Sigmoid colon (tissue), 7 donors: ENCODE measurements at regions of chr16 and their contacts with region 1.

Region 1: GRCh38 chr16:425082-425718 is at the start of gene RAB11FIP3:
- DNase-seq: peak; percentile 93
- H3K4me3 ChIP-seq: peak within 1 kb of the TSS; percentile 64 to 81 (median 74)
- H3K27ac ChIP-seq: peak within 1 kb of the TSS; percentile 94 to 99 (median 98)
- H3K4me1 ChIP-seq: peaks cover 0 to 49% (median 45%) of the 10 kb centered on the region in 4 donors
- H3K27me3 ChIP-seq: no peaks in the 10 kb centered on the region
- CTCF ChIP-seq: peak in 1 of 4 experiments; percentile 3
- EP300 ChIP-seq: no peak
- POLR2A ChIP-seq: peak; percentile 79 to 83
- total RNA-seq, gene RAB11FIP3: 20.0 to 44.9 (median 28.9) TPM

Region 2: GRCh38 chr16:352547-353403 is 72.4 kb before region 1 on chr16 and contains the start of gene AXIN1:
- intact Hi-C with region 1: loop called (anchors 1 kb)
- DNase-seq: peak; percentile 100
- H3K4me3 ChIP-seq: peak within 1 kb of the TSS; percentile 47 to 86 (median 81)
- H3K27ac ChIP-seq: peak within 1 kb of the TSS; percentile 73 to 84 (median 79)
- H3K4me1 ChIP-seq: peaks cover 0 to 17% (median 13%) of the 10 kb centered on the region in 4 donors
- H3K27me3 ChIP-seq: no peaks in the 10 kb centered on the region
- CTCF ChIP-seq: peak in 1 of 4 experiments; percentile 64
- EP300 ChIP-seq: no peak
- POLR2A ChIP-seq: peak in 1 of 2 donors; percentile 65
- total RNA-seq, gene AXIN1: 17.9 to 29.9 (median 20.9) TPM

Region 3: GRCh38 chr16:381789-382717 is 43.1 kb before region 1 on chr16 and contains the start of gene PGAP6:
- intact Hi-C with region 1: loop called (anchors 5 kb)
- DNase-seq: peak; percentile 83
- H3K4me3 ChIP-seq: peak within 1 kb of the TSS; percentile 76 to 99 (median 81)
- H3K27ac ChIP-seq: peak within 1 kb of the TSS; percentile 82 to 89 (median 86)
- H3K4me1 ChIP-seq: peaks cover 3 to 59% (median 41%) of the 10 kb centered on the region in 4 donors
- H3K27me3 ChIP-seq: no peaks in the 10 kb centered on the region
- CTCF ChIP-seq: no peak
- EP300 ChIP-seq: no peak
- POLR2A ChIP-seq: no peak
- total RNA-seq, gene PGAP6: 20.7 to 26.6 (median 22.7) TPM

Region 4: GRCh38 chr16:401468-402348 is 23.5 kb before region 1 on chr16 and contains the start of gene DECR2:
- intact Hi-C with region 1: loop called (anchors 1 kb)
- DNase-seq: peak; percentile 97
- H3K4me3 ChIP-seq: peak within 1 kb of the TSS; percentile 66 to 90 (median 87)
- H3K27ac ChIP-seq: peak within 1 kb of the TSS; percentile 91 to 96 (median 93)
- H3K4me1 ChIP-seq: peaks cover 0 to 42% (median 33%) of the 10 kb centered on the region in 4 donors
- H3K27me3 ChIP-seq: no peaks in the 10 kb centered on the region
- CTCF ChIP-seq: peak; percentile 10 to 56 (median 35)
- EP300 ChIP-seq: no peak
- POLR2A ChIP-seq: peak in 1 of 2 donors; percentile 76
- total RNA-seq, gene DECR2: 15.0 to 21.6 (median 16.4) TPM

Region 5: DNA sequence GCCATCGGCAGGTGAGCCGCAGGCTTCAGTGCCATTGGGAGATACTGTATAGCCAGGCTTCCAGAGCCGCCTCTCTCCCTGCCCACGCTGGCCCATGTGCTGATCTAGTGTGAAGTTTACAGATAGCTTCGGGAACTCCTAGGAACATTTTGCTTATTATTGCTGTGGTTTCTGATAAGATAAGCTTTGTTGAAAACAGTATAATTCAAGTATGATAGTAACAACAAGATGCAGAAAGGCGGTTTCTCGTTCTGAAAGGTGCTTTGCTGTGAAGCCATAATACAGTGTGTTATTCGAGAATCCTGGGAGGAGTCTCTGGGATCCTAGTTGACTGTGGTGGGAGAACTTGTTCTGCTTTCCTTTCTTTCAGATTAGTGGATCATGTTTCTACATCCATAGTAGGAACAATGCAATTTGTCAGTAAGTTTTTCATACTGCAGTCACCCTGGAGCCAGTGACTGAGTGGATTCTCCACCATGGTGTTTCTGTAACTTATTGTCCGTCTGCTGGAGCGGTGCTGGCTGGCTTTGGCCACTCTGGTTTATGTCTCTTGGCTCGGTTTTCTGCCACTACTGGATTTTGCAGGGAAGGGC is 31.8 kb after region 1 on chr16:
- intact Hi-C with region 1: loop called (anchors 2 kb)
- DNase-seq: no peak
- H3K4me3 ChIP-seq: no peak overlapping the region
- H3K27ac ChIP-seq: peak overlapping the region; percentile 42 to 69 (median 58)
- H3K4me1 ChIP-seq: peaks cover 0 to 24% (median 13%) of the 10 kb centered on the region in 4 donors
- H3K27me3 ChIP-seq: no peaks in the 10 kb centered on the region
- CTCF ChIP-seq: no peak
- EP300 ChIP-seq: no peak
- POLR2A ChIP-seq: no peak

Region 6: GRCh38 chr16:471353-472198 is 46.4 kb after region 1 on chr16:
- intact Hi-C with region 1: loop called (anchors 5 kb)
- DNase-seq: peak; percentile 72
- H3K4me3 ChIP-seq: no peak overlapping the region
- H3K27ac ChIP-seq: peak overlapping the region; percentile 1 to 60 (median 44)
- H3K4me1 ChIP-seq: peaks cover 0 to 13% (median 12%) of the 10 kb centered on the region in 4 donors
- H3K27me3 ChIP-seq: no peaks in the 10 kb centered on the region
- CTCF ChIP-seq: no peak
- EP300 ChIP-seq: no peak
- POLR2A ChIP-seq: no peak

Region 7: GRCh38 chr16:483341-484075 is 58.3 kb after region 1 on chr16:
- intact Hi-C with region 1: no loop called
- DNase-seq: no peak
- H3K4me3 ChIP-seq: no peak overlapping the region
- H3K27ac ChIP-seq: peak overlapping the region in 2 of 4 donors; percentile 20 to 61
- H3K4me1 ChIP-seq: peaks cover 0 to 11% (median 3%) of the 10 kb centered on the region in 4 donors
- H3K27me3 ChIP-seq: no peaks in the 10 kb centered on the region
- CTCF ChIP-seq: no peak
- EP300 ChIP-seq: no peak
- POLR2A ChIP-seq: no peak

Region 8: GRCh38 chr16:527006-527753 is 102.0 kb after region 1 on chr16 and contains the start of gene CAPN15:
- intact Hi-C with region 1: loop called (anchors 2 kb)
- DNase-seq: peak; percentile 94
- H3K4me3 ChIP-seq: peak within 1 kb of the TSS; percentile 57 to 65 (median 62)
- H3K27ac ChIP-seq: peak within 1 kb of the TSS; percentile 86 to 96 (median 94)
- H3K4me1 ChIP-seq: peaks cover 0 to 55% (median 41%) of the 10 kb centered on the region in 4 donors
- H3K27me3 ChIP-seq: no peaks in the 10 kb centered on the region
- CTCF ChIP-seq: peak; percentile 9 to 37 (median 26)
- EP300 ChIP-seq: no peak
- POLR2A ChIP-seq: peak; percentile 48 to 59
- total RNA-seq, gene CAPN15: 10.3 to 24.4 (median 16.9) TPM